ENCODE measurements at regions of chr1 and their contacts with region 1.

Region 1: GRCh38 chr1:180027949-180028445 is 73.4 kb downstream of the CEP350 start:
- DNase-seq: no peak
- ATAC-seq: peak in 1 of 8 donors; percentile 44
- H3K4me3 ChIP-seq: no peak overlapping the region
- H3K27ac ChIP-seq: peak overlapping the region in 1 of 10 donors; percentile 31
- H3K4me1 ChIP-seq: peaks cover 0 to 15% (median 0%) of the 10 kb centered on the region in 9 donors
- H3K27me3 ChIP-seq: no peaks in the 10 kb centered on the region
- CTCF ChIP-seq: no peak

Region 2: DNA sequence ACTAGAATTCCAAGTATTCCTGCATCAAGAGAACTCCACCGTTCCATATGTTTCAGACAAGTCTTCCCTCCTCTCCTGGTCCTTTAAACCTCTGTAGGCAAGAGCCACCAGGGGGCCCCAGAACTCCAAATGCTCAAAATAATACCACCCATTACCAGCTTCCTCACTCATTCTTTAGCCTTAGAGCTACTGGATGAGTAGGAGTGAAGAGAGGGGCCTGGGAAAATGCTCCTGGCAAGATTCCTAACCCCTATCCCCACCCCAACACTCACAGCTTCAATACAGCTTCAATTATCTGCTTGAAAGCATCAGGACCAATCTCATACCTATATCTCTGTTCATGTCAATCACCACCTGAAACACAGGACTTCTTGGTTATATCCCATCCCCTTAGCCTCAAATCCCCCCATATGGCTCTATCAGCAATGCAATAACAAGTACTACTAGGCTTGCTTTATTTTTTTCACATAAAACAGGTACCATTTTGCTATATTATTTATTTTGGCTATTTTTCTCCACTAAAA is 160.1 kb before region 1 on chr1:
- intact Hi-C with region 1: loop called in 1 of 10 experiments (anchors 10 kb)
- DNase-seq: peak in 1 of 2 donors; percentile 25
- ATAC-seq: peak in 5 of 8 donors; percentile 29 to 74 (median 53)
- H3K4me3 ChIP-seq: no peak overlapping the region
- H3K27ac ChIP-seq: no peak overlapping the region
- H3K4me1 ChIP-seq: peaks cover 0 to 45% (median 30%) of the 10 kb centered on the region in 9 donors
- H3K27me3 ChIP-seq: no peaks in the 10 kb centered on the region
- CTCF ChIP-seq: peak; percentile 23 to 82 (median 64)

Region 3: GRCh38 chr1:179882243-179883039 is 145.6 kb before region 1 on chr1 and contains the start of gene TOR1AIP1:
- intact Hi-C with region 1: loop called in 1 of 10 experiments (anchors 10 kb)
- DNase-seq: peak; percentile 97 to 98
- ATAC-seq: peak; percentile 94 to 98 (median 96)
- H3K4me3 ChIP-seq: peak within 1 kb of the TSS; percentile 64 to 90 (median 79)
- H3K27ac ChIP-seq: peak within 1 kb of the TSS; percentile 95 to 100 (median 99)
- H3K4me1 ChIP-seq: peaks cover 3 to 62% (median 57%) of the 10 kb centered on the region in 9 donors
- H3K27me3 ChIP-seq: no peaks in the 10 kb centered on the region
- CTCF ChIP-seq: peak; percentile 27 to 62 (median 40)
- total RNA-seq, gene TOR1AIP1: 31.6 to 50.3 (median 46.0) TPM

Region 4: DNA sequence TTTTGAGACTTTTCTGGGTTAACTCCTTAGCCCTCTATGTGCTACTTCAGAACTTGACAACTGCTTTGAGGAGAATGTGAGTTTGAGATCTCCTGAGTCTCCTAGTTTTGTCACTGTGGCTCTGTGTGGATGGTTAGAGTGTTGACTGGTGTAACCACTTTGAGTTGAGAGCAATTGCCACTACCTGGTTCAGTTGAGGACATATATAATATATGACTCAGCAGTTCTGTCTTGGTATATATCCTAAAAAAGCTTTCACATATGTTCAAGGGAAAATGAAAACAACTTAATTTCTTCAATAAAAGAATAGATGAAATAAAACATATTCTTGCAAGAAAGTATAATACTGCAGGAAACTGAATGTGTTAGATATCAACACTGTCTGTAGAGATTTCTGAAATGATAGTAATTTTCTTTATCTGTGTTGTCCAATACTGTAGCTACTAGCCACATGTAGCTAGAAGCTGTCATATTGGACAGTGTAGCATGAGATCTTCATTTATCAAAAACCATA is 29.9 kb after region 1 on chr1:
- intact Hi-C with region 1: loop called in 1 of 10 experiments (anchors 5 kb)
- DNase-seq: no peak
- ATAC-seq: no peak
- H3K4me3 ChIP-seq: no peak overlapping the region
- H3K27ac ChIP-seq: no peak overlapping the region
- H3K4me1 ChIP-seq: no peaks in the 10 kb centered on the region
- H3K27me3 ChIP-seq: no peaks in the 10 kb centered on the region
- CTCF ChIP-seq: no peak

Region 5: DNA sequence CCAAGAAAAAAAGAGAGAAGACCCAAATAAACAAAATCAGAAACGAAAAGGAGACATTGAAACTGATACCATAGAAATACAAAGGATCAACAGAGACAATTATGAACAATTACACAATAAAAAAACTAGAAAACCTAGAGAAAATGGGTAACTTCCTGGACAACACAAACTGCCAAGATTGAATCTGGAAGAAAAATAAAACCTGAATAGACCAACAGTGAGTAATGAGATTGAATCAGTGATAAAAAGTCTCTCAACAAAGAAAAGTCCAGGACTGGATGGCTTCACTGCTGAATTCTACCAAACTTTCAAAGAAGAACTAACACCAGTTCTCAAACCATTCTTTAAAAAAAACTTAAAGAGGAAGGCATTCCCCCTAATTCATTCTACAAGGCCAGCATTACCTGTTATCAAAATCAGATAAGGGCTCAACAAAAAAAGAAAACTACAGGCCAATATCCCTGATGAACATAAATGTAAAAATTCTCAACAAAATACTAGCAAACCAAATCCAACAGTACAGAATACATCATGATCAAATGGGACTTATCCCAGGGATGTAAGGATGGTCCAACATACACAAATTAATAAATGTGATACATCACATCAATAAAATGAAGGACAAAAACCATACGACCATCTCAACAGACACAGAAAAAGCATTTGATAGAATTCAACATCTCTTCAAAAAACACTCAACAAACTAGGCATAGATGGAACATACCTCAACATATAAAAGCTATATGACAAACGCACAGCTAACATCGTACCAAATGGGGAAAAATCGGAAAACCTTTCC is 354.5 kb after region 1 on chr1:
- intact Hi-C with region 1: no loop called
- DNase-seq: no peak
- ATAC-seq: no peak
- H3K4me3 ChIP-seq: no peak overlapping the region
- H3K27ac ChIP-seq: no peak overlapping the region
- H3K4me1 ChIP-seq: no peaks in the 10 kb centered on the region
- H3K27me3 ChIP-seq: no peaks in the 10 kb centered on the region
- CTCF ChIP-seq: no peak

Measured in heart right ventricle (tissue), 16 donors.